ENCODE measurements at regions of chr14 and their contacts with region 1.

Region 1: GRCh38 chr14:25699981-25700380 is 650.0 kb upstream of the STXBP6 start:
- DNase-seq: no peak
- H3K4me3 Mint-ChIP-seq: no peak overlapping the region
- H3K27ac Mint-ChIP-seq: no peak overlapping the region
- H3K4me1 Mint-ChIP-seq: no peaks in the 10 kb centered on the region
- H3K27me3 Mint-ChIP-seq: no peaks in the 10 kb centered on the region
- CTCF ChIP-seq: no peak

Region 2: DNA sequence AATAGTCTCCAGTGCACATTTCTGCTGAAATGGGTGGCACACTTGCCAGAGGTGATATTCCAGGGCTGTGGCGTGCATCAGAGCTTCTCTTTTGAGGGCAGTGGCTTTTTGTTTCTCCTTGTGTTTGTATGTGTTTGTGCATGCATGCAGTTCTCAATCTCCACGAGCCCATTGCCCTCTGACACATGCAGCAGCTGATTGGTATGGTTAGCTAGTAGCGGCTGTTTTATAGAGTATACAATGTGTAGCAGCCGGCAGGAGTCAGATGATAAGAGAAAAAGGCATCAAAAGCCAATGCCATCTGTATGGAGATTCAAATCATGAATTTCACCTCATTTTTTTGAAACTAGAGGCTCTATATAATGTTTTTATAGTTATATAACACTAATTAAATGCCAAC is 33.1 kb before region 1 on chr14:
- CTCF ChIA-PET with region 1: no interaction called
- POLR2A ChIA-PET with region 1: no interaction called
- intact Hi-C with region 1: no loop called
- DNase-seq: no peak
- H3K4me3 Mint-ChIP-seq: no peak overlapping the region
- H3K27ac Mint-ChIP-seq: no peak overlapping the region
- H3K4me1 Mint-ChIP-seq: no peaks in the 10 kb centered on the region
- H3K27me3 Mint-ChIP-seq: no peaks in the 10 kb centered on the region
- CTCF ChIP-seq: no peak

Region 3: DNA sequence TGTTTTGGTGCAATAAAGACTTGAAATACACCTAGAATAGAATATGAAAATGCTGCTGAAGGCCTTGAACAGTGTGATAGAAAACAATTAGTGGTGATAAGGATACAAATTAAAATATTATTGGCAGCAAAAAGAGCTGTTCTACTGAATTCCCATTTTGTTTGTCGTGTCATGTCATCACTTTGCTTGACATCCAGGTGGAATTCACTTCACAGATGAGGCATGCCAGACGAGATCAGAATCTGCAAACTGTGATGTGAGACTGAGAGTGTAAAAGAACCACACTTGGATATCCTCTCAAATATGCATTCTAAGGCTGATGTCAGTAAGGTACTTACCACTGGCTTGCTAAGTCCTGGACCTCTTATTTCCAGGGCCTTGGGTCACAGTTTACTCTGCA is 15.0 kb before region 1 on chr14:
- CTCF ChIA-PET with region 1: no interaction called
- POLR2A ChIA-PET with region 1: no interaction called
- intact Hi-C with region 1: loop called (anchors 2 kb)
- DNase-seq: no peak
- H3K4me3 Mint-ChIP-seq: no peak overlapping the region
- H3K27ac Mint-ChIP-seq: no peak overlapping the region
- H3K4me1 Mint-ChIP-seq: no peaks in the 10 kb centered on the region
- H3K27me3 Mint-ChIP-seq: no peaks in the 10 kb centered on the region
- CTCF ChIP-seq: no peak